ENCODE measurements at regions of chr6 and their contacts with region 1.

Region 1: GRCh38 chr6:42879372-42880239 is at the start of gene RPL7L1:
- DNase-seq: peak; percentile 95
- ATAC-seq: peak; percentile 94
- H3K4me3 ChIP-seq: peak within 1 kb of the TSS; percentile 85 to 92 (median 89)
- H3K27ac ChIP-seq: peak within 1 kb of the TSS; percentile 93
- H3K4me1 ChIP-seq: peaks cover 65% of the 10 kb centered on the region
- H3K27me3 ChIP-seq: no peaks in the 10 kb centered on the region; a peak in 1 of 5 replicates
- CTCF ChIP-seq: no peak; the same call in none of the 2 replicates
- EP300 ChIP-seq: peak; percentile 17 to 20; a peak in 2 of 4 replicates
- POLR2A ChIP-seq: peak; percentile 92 to 98
- RAD21 ChIP-seq: peak; percentile 25; the same call in 1 of the 2 replicates
- total RNA-seq, gene RPL7L1: 179 and 228 TPM in 2 replicates

Region 2: DNA sequence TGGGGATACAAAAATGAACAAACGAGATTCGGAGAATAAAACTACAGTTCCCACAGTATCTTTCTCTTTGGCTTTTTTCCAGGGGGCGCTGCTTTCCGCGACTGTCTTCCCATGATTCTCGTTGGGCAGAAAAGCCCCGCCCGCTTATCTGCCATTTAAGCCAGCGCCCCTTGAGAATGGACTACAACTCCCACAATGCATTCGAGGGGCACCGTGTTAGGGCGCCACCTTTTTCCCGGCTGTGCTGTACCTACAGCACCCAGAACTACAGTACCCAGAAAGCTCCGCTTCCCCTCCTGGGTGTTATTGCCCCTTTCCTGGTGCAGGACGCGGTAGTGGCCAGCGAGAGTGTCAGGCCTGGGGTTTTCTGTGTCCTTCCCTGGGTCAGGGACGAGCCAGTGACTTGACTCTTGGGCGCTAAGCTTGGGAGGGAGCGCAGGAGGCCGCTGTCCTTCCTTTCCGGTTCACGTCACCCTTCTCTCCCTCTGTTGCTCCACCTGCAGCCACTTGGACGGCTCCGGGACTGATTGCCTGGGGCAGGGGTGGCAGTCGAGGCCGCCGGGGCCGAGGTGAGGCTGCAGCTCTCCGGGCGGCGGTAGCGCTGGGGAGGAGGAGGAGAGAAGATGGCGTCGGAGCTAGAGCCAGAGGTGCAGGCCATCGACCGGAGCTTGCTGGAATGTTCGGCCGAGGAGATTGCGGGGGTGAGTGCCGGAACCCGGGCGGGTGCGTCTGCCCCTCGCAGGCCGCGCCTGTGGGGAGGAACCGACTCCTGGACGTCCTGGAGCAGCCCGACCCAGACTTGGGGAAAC is 315.7 kb before region 1 on chr6 and contains the start of gene UBR2:
- CTCF ChIA-PET with region 1: no interaction called
- POLR2A ChIA-PET with region 1: interaction called, 25 read pairs
- in situ Hi-C with region 1: no loop called
- intact Hi-C with region 1: no loop called
- DNase-seq: peak; percentile 99
- ATAC-seq: peak; percentile 98
- H3K4me3 ChIP-seq: peak within 1 kb of the TSS; percentile 95 to 99 (median 96)
- H3K27ac ChIP-seq: peak within 1 kb of the TSS; percentile 93
- H3K4me1 ChIP-seq: peaks cover 31% of the 10 kb centered on the region
- H3K27me3 ChIP-seq: peaks cover 0 to 5% of the 10 kb centered on the region in 2 experiments; a peak in 1 of 5 replicates
- CTCF ChIP-seq: peak; percentile 82
- EP300 ChIP-seq: peak in 1 of 2 experiments; percentile 62; a peak in 2 of 4 replicates
- POLR2A ChIP-seq: peak; percentile 96 to 98
- RAD21 ChIP-seq: peak; percentile 40; the same call in 1 of the 2 replicates
- total RNA-seq, gene UBR2: 29.3 and 39.3 TPM in 2 replicates

Region 3: GRCh38 chr6:42726485-42727086 is 153.0 kb before region 1 on chr6:
- CTCF ChIA-PET with region 1: interaction called, 12 read pairs
- POLR2A ChIA-PET with region 1: interaction called, 4 read pairs
- in situ Hi-C with region 1: no loop called
- intact Hi-C with region 1: loop called (anchors 1 kb)
- DNase-seq: peak; percentile 84
- ATAC-seq: peak; percentile 82
- H3K4me3 ChIP-seq: no peak overlapping the region
- H3K27ac ChIP-seq: no peak overlapping the region
- H3K4me1 ChIP-seq: peaks cover 20% of the 10 kb centered on the region
- H3K27me3 ChIP-seq: no peaks in the 10 kb centered on the region
- CTCF ChIP-seq: peak; percentile 94
- EP300 ChIP-seq: no peak
- POLR2A ChIP-seq: no peak
- RAD21 ChIP-seq: peak; percentile 90; the same call in 1 of the 2 replicates

Region 4: GRCh38 chr6:42756722-42757121 is 122.9 kb before region 1 on chr6:
- CTCF ChIA-PET with region 1: no interaction called
- POLR2A ChIA-PET with region 1: no interaction called
- in situ Hi-C with region 1: no loop called
- intact Hi-C with region 1: no loop called
- DNase-seq: no peak
- ATAC-seq: no peak
- H3K4me3 ChIP-seq: no peak overlapping the region
- H3K27ac ChIP-seq: no peak overlapping the region
- H3K4me1 ChIP-seq: peaks cover 7% of the 10 kb centered on the region
- H3K27me3 ChIP-seq: no peaks in the 10 kb centered on the region
- CTCF ChIP-seq: no peak
- EP300 ChIP-seq: no peak
- POLR2A ChIP-seq: no peak
- RAD21 ChIP-seq: no peak

Region 5: DNA sequence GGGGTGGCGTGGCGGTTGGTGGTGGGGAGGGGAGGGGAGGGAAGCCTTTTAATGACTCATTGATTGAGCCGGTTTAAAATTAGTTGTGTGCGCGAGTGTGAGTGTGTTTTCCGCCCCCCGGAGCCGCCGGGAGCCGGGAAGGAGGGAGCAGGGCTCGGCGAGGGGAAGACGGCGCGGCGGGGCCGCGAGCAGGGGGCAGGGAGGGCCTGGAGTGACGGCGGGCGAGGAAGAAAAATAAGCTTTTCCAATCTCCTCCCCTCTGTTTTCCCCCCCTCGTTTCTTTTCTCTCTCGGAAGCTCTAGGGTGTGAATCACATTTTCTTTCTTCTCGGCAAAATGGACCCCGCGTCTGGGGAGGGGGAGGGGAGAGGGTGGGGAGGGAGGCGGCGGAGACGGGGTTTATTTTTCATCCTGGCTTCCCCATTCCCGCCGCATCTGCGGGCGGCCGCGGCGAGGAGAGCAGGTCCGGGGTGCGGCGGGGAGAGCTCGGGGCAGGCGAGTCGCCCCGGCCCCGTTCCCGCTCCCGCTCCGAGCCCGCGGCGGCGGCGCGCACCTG is 96.9 kb before region 1 on chr6:
- CTCF ChIA-PET with region 1: no interaction called
- POLR2A ChIA-PET with region 1: interaction called, 57 read pairs
- in situ Hi-C with region 1: no loop called
- intact Hi-C with region 1: loop called (anchors 2 kb)
- DNase-seq: peak; percentile 83
- ATAC-seq: peak; percentile 60
- H3K4me3 ChIP-seq: peak overlapping the region; percentile 85 to 94 (median 92)
- H3K27ac ChIP-seq: peak overlapping the region; percentile 98
- H3K4me1 ChIP-seq: peaks cover 64% of the 10 kb centered on the region
- H3K27me3 ChIP-seq: no peaks in the 10 kb centered on the region; a peak in 1 of 5 replicates
- CTCF ChIP-seq: no peak
- EP300 ChIP-seq: no peak
- POLR2A ChIP-seq: peak; percentile 54 to 90
- RAD21 ChIP-seq: no peak

Region 6: DNA sequence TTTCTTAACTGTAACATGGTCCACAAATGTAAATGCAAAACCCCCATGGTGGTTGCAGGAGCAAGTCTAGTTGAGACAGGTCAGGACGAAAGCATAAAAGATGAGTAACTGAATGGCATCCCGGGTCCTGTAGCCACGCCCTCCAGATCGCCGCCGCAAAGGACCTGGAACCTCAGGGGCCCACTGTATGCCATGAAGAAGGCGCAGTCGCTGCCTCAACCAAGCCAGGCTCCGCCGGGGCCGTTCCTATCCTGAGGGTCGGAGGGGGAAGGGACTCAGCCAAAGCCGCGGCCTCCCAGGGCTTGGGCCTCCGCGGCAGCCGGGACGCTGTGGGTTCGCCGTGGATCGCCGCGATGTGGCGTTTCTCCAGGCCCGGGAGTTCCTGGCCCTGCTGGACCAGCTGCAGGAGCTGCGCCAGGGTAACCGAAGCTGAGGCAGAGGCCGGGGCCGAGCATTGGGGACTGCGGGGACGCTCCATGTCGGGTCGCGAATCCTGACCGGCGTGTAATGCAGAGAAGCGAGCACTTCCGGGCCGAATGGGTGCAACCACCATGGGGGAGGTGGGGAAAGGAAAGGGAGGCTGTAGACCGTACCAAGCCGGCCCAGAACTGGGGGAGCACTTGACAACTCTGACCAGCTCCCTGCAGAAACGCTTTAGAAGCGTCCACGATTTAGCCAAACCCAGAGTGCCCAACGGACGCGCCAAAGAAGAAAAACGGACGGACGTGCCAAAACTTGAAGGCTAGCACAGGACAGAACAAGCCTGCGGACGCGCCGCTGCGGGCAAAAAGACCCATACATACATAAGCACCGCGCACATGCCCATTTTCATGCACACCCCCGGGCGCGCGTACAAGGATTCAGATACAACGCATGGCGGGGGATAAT is 10.9 kb after region 1 on chr6:
- CTCF ChIA-PET with region 1: no interaction called
- POLR2A ChIA-PET with region 1: interaction called, 147 read pairs
- in situ Hi-C with region 1: no loop called
- intact Hi-C with region 1: loop called (anchors 1 kb)
- DNase-seq: peak; percentile 95
- ATAC-seq: peak; percentile 91
- H3K4me3 ChIP-seq: peak overlapping the region; percentile 75 to 95 (median 86)
- H3K27ac ChIP-seq: peak overlapping the region; percentile 94
- H3K4me1 ChIP-seq: peaks cover 46% of the 10 kb centered on the region
- H3K27me3 ChIP-seq: no peaks in the 10 kb centered on the region
- CTCF ChIP-seq: 0 out of 2 replicates have a peak, but pooled peaks have one; percentile 36
- EP300 ChIP-seq: no peak
- POLR2A ChIP-seq: peak; percentile 92 to 95
- RAD21 ChIP-seq: peak; percentile 78

Region 7: GRCh38 chr6:42901536-42901957 is 21.9 kb after region 1 on chr6:
- CTCF ChIA-PET with region 1: no interaction called
- POLR2A ChIA-PET with region 1: interaction called, 10 read pairs
- in situ Hi-C with region 1: no loop called
- intact Hi-C with region 1: loop called (anchors 1 kb)
- DNase-seq: peak; percentile 92
- ATAC-seq: peak; percentile 94
- H3K4me3 ChIP-seq: peak overlapping the region; percentile 48 to 71 (median 63)
- H3K27ac ChIP-seq: no peak overlapping the region
- H3K4me1 ChIP-seq: peaks cover 38% of the 10 kb centered on the region
- H3K27me3 ChIP-seq: no peaks in the 10 kb centered on the region
- CTCF ChIP-seq: peak; percentile 98
- EP300 ChIP-seq: 0 out of 4 replicates have a peak, but pooled peaks of 1 of the 2 experiments have one; percentile 16
- POLR2A ChIP-seq: no peak
- RAD21 ChIP-seq: peak; percentile 96

Region 8: GRCh38 chr6:42978839-42979522 is 99.4 kb after region 1 on chr6 and contains the start of gene PEX6:
- CTCF ChIA-PET with region 1: no interaction called
- POLR2A ChIA-PET with region 1: interaction called, 14 read pairs
- in situ Hi-C with region 1: no loop called
- intact Hi-C with region 1: no loop called
- DNase-seq: peak; percentile 90
- ATAC-seq: peak; percentile 91
- H3K4me3 ChIP-seq: peak within 1 kb of the TSS; percentile 79 to 96 (median 95)
- H3K27ac ChIP-seq: peak within 1 kb of the TSS; percentile 73
- H3K4me1 ChIP-seq: peaks cover 44% of the 10 kb centered on the region
- H3K27me3 ChIP-seq: no peaks in the 10 kb centered on the region; a peak in 1 of 5 replicates
- CTCF ChIP-seq: peak; percentile 33; the same call in 1 of the 2 replicates
- EP300 ChIP-seq: no peak; a peak in 1 of 4 replicates
- POLR2A ChIP-seq: peak; percentile 96
- RAD21 ChIP-seq: 0 out of 2 replicates have a peak, but pooled peaks have one; percentile 17
- total RNA-seq, gene PEX6: 3.6 and 5.1 TPM in 2 replicates

Measured in HepG2 (cell line).